ENCODE measurements at regions of chr11 and their contacts with region 1.

Region 1: GRCh38 chr11:62497132-62497915 is 49.3 kb downstream of the AHNAK start:
- DNase-seq: peak; percentile 77
- ATAC-seq: peak; percentile 85
- H3K4me3 ChIP-seq: no peak overlapping the region
- H3K27ac ChIP-seq: peak overlapping the region; percentile 99
- H3K4me1 ChIP-seq: peaks cover 38% of the 10 kb centered on the region
- H3K27me3 ChIP-seq: no peaks in the 10 kb centered on the region
- CTCF ChIP-seq: peak; percentile 82; the same call in 1 of the 2 replicates

Region 2: GRCh38 chr11:62256281-62256680 is 241.0 kb before region 1 on chr11:
- CTCF ChIA-PET with region 1: no interaction called
- POLR2A ChIA-PET with region 1: no interaction called
- in situ Hi-C with region 1: no loop called
- intact Hi-C with region 1: no loop called
- DNase-seq: no peak
- ATAC-seq: no peak
- H3K4me3 ChIP-seq: no peak overlapping the region
- H3K27ac ChIP-seq: no peak overlapping the region
- H3K4me1 ChIP-seq: no peaks in the 10 kb centered on the region
- H3K27me3 ChIP-seq: peaks cover 2% of the 10 kb centered on the region; the same call in 1 of the 2 replicates
- CTCF ChIP-seq: no peak

Region 3: GRCh38 chr11:62400760-62401159 is 96.6 kb before region 1 on chr11:
- CTCF ChIA-PET with region 1: no interaction called
- POLR2A ChIA-PET with region 1: no interaction called
- in situ Hi-C with region 1: no loop called
- intact Hi-C with region 1: no loop called
- DNase-seq: no peak
- ATAC-seq: no peak
- H3K4me3 ChIP-seq: no peak overlapping the region
- H3K27ac ChIP-seq: peak overlapping the region; percentile 59; the same call in 1 of the 2 replicates
- H3K4me1 ChIP-seq: peaks cover 31% of the 10 kb centered on the region
- H3K27me3 ChIP-seq: no peaks in the 10 kb centered on the region
- CTCF ChIP-seq: no peak

Region 4: GRCh38 chr11:62435846-62436660 is 61.3 kb before region 1 on chr11:
- CTCF ChIA-PET with region 1: no interaction called
- POLR2A ChIA-PET with region 1: interaction called, 10 read pairs
- in situ Hi-C with region 1: no loop called
- intact Hi-C with region 1: no loop called
- DNase-seq: no peak
- ATAC-seq: no peak
- H3K4me3 ChIP-seq: no peak overlapping the region
- H3K27ac ChIP-seq: peak overlapping the region; percentile 89
- H3K4me1 ChIP-seq: peaks cover 63% of the 10 kb centered on the region
- H3K27me3 ChIP-seq: no peaks in the 10 kb centered on the region
- CTCF ChIP-seq: no peak

Region 5: DNA sequence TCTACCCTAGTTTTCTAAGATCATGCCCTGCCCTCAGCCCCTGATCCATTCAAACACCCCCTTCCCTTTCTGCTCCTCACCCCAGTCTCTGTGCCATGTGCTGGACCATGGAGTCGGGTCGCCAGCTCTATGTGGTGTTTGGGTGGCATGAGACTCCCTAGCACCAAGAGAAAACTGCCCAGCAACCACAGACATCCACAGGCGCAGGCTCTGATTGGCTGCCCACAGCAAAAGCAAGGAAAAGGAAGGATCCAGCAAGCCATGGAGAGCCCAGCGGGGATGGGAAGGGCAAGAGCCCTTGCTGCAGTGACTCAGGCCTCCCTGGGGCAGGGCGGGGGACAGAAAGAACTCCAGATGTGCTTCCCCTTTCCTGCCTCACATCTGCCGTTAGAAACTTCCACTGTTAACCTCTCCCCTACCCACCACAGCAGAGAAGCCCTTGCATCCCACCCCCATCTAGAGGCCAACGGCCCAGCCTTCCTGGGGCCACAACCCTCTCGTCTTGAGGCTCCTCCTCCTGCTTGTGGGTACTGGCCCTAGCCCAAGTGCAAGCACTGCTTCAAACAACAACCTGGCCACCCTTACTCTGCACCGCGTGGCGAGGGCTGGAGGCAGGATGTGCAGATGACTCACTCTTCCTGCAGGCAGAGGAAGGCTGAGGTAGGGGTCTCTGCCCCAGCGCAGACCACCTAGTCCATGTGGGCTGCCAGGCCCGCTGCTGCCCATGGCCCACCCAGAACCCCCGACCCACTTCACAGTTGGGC is 59.0 kb after region 1 on chr11:
- CTCF ChIA-PET with region 1: interaction called, 3 read pairs
- POLR2A ChIA-PET with region 1: interaction called, 11 read pairs
- in situ Hi-C with region 1: no loop called
- intact Hi-C with region 1: no loop called
- DNase-seq: peak; percentile 87
- ATAC-seq: peak; percentile 74
- H3K4me3 ChIP-seq: peak overlapping the region in 1 of 2 experiments; percentile 15; a peak in 1 of 4 replicates
- H3K27ac ChIP-seq: peak overlapping the region; percentile 94
- H3K4me1 ChIP-seq: peaks cover 95% of the 10 kb centered on the region
- H3K27me3 ChIP-seq: no peaks in the 10 kb centered on the region
- CTCF ChIP-seq: no peak

Measured in Panc1 (cell line).